CD8-positive, alpha-beta T cell (primary cell): ENCODE measurements at regions of chr18 and their contacts with region 1.

Region 1: GRCh38 chr18:46660955-46661749 is 4.1 kb upstream of the LOXHD1 start:
- DNase-seq: no peak
- ATAC-seq: no peak
- H3K4me3 ChIP-seq: no peak overlapping the region
- H3K4me3 Mint-ChIP-seq: no peak overlapping the region
- H3K27ac ChIP-seq: no peak overlapping the region
- H3K27ac Mint-ChIP-seq: no peak overlapping the region
- H3K4me1 ChIP-seq: no peaks in the 10 kb centered on the region
- H3K4me1 Mint-ChIP-seq: no peaks in the 10 kb centered on the region
- H3K27me3 ChIP-seq: no peaks in the 10 kb centered on the region
- H3K27me3 Mint-ChIP-seq: peaks cover 9% of the 10 kb centered on the region
- CTCF ChIP-seq: no peak

Region 2: GRCh38 chr18:46155641-46156051 is 505.5 kb before region 1 on chr18:
- CTCF ChIA-PET with region 1: interaction called, 42 read pairs
- POLR2A ChIA-PET with region 1: no interaction called
- intact Hi-C with region 1: no loop called
- DNase-seq: peak in 8 of 9 experiments; percentile 10 to 70 (median 36)
- ATAC-seq: peak; percentile 89
- H3K4me3 ChIP-seq: peak overlapping the region in 1 of 2 experiments; percentile 2
- H3K4me3 Mint-ChIP-seq: peak overlapping the region; percentile 74
- H3K27ac ChIP-seq: peak overlapping the region; percentile 45 to 77
- H3K27ac Mint-ChIP-seq: peak overlapping the region; percentile 96
- H3K4me1 ChIP-seq: peaks cover 77% of the 10 kb centered on the region
- H3K4me1 Mint-ChIP-seq: peaks cover 73% of the 10 kb centered on the region
- H3K27me3 ChIP-seq: no peaks in the 10 kb centered on the region
- H3K27me3 Mint-ChIP-seq: no peaks in the 10 kb centered on the region
- CTCF ChIP-seq: no peak

Region 3: GRCh38 chr18:46408334-46408987 is 252.7 kb before region 1 on chr18:
- CTCF ChIA-PET with region 1: interaction called, 3 read pairs
- POLR2A ChIA-PET with region 1: no interaction called
- intact Hi-C with region 1: loop called in 1 of 2 experiments (anchors 5 kb)
- DNase-seq: no peak
- ATAC-seq: no peak
- H3K4me3 ChIP-seq: no peak overlapping the region
- H3K4me3 Mint-ChIP-seq: no peak overlapping the region
- H3K27ac ChIP-seq: no peak overlapping the region
- H3K27ac Mint-ChIP-seq: no peak overlapping the region
- H3K4me1 ChIP-seq: no peaks in the 10 kb centered on the region
- H3K4me1 Mint-ChIP-seq: no peaks in the 10 kb centered on the region
- H3K27me3 ChIP-seq: no peaks in the 10 kb centered on the region
- H3K27me3 Mint-ChIP-seq: no peaks in the 10 kb centered on the region
- CTCF ChIP-seq: no peak

Region 4: DNA sequence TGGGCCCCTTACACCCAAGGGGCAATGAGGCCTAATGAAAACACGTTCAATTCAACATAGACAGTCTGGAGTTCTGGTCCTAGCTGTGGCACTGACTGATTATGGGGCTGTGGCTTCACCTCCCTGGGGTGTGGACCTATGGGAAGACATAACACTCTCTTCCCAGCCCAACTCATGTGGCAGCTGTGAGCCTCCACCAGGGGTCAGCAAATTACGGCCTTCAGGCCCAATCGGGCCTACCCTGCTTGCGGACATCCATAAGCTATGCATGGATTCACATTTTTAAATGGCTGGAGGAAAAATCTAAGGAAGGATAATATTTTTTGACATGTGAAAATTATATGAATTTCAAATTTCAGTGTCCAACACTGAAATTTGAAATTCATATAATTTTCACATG is 105.4 kb before region 1 on chr18:
- CTCF ChIA-PET with region 1: interaction called, 33 read pairs
- POLR2A ChIA-PET with region 1: no interaction called
- intact Hi-C with region 1: loop called in 1 of 2 experiments (anchors 2 kb)
- DNase-seq: peak in 2 of 9 experiments; percentile 35 to 39
- ATAC-seq: no peak
- H3K4me3 ChIP-seq: no peak overlapping the region
- H3K4me3 Mint-ChIP-seq: no peak overlapping the region
- H3K27ac ChIP-seq: no peak overlapping the region
- H3K27ac Mint-ChIP-seq: no peak overlapping the region
- H3K4me1 ChIP-seq: no peaks in the 10 kb centered on the region
- H3K4me1 Mint-ChIP-seq: no peaks in the 10 kb centered on the region
- H3K27me3 ChIP-seq: no peaks in the 10 kb centered on the region
- H3K27me3 Mint-ChIP-seq: no peaks in the 10 kb centered on the region
- CTCF ChIP-seq: no peak

Region 5: DNA sequence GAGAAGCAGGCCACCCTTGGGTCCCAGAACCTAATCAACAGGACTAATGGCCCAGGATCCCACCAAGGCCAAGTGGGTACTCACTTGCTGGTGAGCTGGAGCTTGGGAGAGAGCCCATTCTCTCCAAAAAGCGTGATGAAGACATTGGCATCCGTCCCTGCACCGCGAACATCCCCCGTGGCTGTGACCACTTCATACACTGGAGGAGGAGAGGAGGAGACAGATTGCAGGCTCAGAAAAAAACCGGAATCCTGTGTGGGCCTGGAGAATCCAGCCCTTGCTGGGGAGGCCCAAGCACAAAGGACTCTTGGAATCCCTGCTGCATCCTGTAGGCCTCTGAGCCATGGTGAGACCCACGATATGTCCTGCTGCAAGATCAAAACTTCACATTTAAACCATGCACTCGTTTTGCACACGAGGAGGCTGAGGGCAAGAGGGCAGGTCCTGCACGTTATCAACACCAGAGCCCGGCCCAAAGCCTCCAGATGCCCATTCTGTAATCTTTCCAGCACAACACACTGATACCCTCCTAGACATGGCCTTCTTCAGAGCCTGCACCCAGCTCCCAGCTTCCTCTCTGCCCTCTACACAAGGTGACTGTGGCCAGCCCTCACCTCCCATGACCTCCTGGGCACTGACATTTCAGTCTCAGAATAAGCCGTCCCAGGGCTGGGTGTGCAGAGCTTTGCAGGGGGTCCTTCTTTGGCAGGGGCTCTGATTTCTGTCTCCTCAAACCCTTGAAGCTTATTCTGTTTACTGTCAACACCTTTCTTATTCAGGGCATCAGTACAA is 11.9 kb before region 1 on chr18:
- CTCF ChIA-PET with region 1: interaction called, 47 read pairs
- POLR2A ChIA-PET with region 1: no interaction called
- intact Hi-C with region 1: no loop called
- DNase-seq: no peak
- ATAC-seq: no peak
- H3K4me3 ChIP-seq: no peak overlapping the region
- H3K4me3 Mint-ChIP-seq: no peak overlapping the region
- H3K27ac ChIP-seq: no peak overlapping the region
- H3K27ac Mint-ChIP-seq: no peak overlapping the region
- H3K4me1 ChIP-seq: no peaks in the 10 kb centered on the region
- H3K4me1 Mint-ChIP-seq: no peaks in the 10 kb centered on the region
- H3K27me3 ChIP-seq: no peaks in the 10 kb centered on the region
- H3K27me3 Mint-ChIP-seq: no peaks in the 10 kb centered on the region
- CTCF ChIP-seq: no peak